IMR-90 (cell line): ENCODE measurements at regions of chr10 and their contacts with region 1.

Region 1: GRCh38 chr10:102220612-102221011 is 5.5 kb upstream of the ELOVL3 start:
- DNase-seq: no peak
- ATAC-seq: no peak
- H3K4me3 ChIP-seq: no peak overlapping the region
- H3K27ac ChIP-seq: no peak overlapping the region
- H3K4me1 ChIP-seq: peaks cover 2% of the 10 kb centered on the region
- H3K27me3 ChIP-seq: peaks cover 7% of the 10 kb centered on the region; the same call in 1 of the 2 replicates
- CTCF ChIP-seq: no peak
- POLR2A ChIP-seq: no peak
- RAD21 ChIP-seq: no peak

Region 2: DNA sequence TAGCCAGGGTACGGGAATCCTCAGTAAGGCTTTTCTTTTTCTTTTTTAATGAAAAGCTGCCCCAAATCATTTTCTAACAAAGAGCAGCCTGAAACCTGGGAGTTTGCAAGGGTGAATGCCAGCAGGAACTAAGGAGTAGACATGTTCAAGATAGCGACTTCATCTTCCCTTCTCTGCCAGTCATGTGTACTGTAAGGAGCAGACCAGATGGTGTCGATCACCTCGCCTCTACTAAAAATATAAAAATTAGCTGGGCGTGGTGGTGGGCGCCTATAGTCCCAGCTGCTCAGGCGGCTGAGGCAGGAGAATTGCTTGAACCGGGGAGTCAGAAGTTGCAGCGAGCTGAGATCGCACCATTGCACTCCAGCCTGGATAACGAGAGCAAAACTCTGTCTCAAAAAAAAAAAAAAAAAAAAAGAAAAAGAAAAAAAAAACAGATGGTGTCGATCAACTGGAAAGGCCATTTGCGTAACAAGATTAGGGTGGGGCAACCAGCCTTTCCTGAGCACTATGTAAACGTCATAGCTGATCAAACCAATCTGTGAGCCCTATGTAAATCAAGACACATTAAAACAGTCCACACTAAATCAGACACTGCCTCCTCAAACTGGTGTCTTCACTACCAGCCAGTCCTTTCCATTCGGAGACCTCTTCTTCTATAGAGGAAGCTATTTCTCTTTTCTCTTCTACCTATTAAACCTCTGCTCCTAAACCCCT is 34.6 kb before region 1 on chr10:
- CTCF ChIA-PET with region 1: no interaction called
- POLR2A ChIA-PET with region 1: no interaction called
- dilution Hi-C with region 1: no loop called
- in situ Hi-C with region 1: no loop called
- intact Hi-C with region 1: loop called (anchors 5 kb)
- DNase-seq: no peak
- ATAC-seq: no peak
- H3K4me3 ChIP-seq: no peak overlapping the region
- H3K27ac ChIP-seq: no peak overlapping the region
- H3K4me1 ChIP-seq: no peaks in the 10 kb centered on the region
- H3K27me3 ChIP-seq: peaks cover 7% of the 10 kb centered on the region
- CTCF ChIP-seq: no peak
- POLR2A ChIP-seq: no peak
- RAD21 ChIP-seq: no peak